A673 (cell line): ENCODE measurements at regions of chr6 and their contacts with region 1.

Region 1: DNA sequence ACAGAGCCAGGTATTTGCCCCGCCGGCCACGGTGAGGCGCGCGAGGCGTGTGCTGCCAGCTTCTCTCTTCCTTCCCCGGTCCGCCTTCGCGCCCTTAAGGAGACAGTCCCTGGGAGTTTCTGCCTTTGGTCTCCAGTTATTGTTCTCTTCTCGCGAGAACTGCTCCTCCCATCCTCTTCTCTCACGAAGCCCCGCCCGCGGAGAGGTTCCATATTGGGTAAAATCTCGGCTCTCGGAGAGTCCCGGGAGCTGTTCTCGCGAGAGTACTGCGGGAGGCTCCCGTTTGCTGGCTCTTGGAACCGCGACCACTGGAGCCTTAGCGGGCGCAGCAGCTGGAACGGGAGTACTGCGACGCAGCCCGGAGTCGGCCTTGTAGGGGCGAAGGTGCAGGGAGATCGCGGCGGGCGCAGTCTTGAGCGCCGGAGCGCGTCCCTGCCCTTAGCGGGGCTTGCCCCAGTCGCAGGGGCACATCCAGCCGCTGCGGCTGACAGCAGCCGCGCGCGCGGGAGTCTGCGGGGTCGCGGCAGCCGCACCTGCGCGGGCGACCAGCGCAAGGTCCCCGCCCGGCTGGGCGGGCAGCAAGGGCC is at the start of gene MAPK14:
- DNase-seq: peak; percentile 100
- H3K4me3 ChIP-seq: peak within 1 kb of the TSS; percentile 97
- H3K27ac ChIP-seq: peak within 1 kb of the TSS; percentile 92
- H3K4me1 ChIP-seq: peaks cover 11% of the 10 kb centered on the region
- H3K27me3 ChIP-seq: no peaks in the 10 kb centered on the region
- CTCF ChIP-seq: peak; percentile 94
- total RNA-seq, gene MAPK14: 50.8 and 53.3 TPM in 2 replicates

Region 2: GRCh38 chr6:34953061-34954025 is 1074.3 kb before region 1 on chr6:
- CTCF ChIA-PET with region 1: no interaction called
- POLR2A ChIA-PET with region 1: no interaction called
- intact Hi-C with region 1: no loop called
- DNase-seq: no peak
- H3K4me3 ChIP-seq: no peak overlapping the region
- H3K27ac ChIP-seq: no peak overlapping the region
- H3K4me1 ChIP-seq: peaks cover 47% of the 10 kb centered on the region
- H3K27me3 ChIP-seq: no peaks in the 10 kb centered on the region
- CTCF ChIP-seq: no peak

Region 3: GRCh38 chr6:36094753-36095496 is 67.3 kb after region 1 on chr6:
- CTCF ChIA-PET with region 1: interaction called, 6 read pairs
- POLR2A ChIA-PET with region 1: no interaction called
- intact Hi-C with region 1: loop called (anchors 1 kb)
- DNase-seq: peak; percentile 87
- H3K4me3 ChIP-seq: no peak overlapping the region
- H3K27ac ChIP-seq: no peak overlapping the region
- H3K4me1 ChIP-seq: peaks cover 10% of the 10 kb centered on the region
- H3K27me3 ChIP-seq: no peaks in the 10 kb centered on the region
- CTCF ChIP-seq: peak; percentile 97

Region 4: DNA sequence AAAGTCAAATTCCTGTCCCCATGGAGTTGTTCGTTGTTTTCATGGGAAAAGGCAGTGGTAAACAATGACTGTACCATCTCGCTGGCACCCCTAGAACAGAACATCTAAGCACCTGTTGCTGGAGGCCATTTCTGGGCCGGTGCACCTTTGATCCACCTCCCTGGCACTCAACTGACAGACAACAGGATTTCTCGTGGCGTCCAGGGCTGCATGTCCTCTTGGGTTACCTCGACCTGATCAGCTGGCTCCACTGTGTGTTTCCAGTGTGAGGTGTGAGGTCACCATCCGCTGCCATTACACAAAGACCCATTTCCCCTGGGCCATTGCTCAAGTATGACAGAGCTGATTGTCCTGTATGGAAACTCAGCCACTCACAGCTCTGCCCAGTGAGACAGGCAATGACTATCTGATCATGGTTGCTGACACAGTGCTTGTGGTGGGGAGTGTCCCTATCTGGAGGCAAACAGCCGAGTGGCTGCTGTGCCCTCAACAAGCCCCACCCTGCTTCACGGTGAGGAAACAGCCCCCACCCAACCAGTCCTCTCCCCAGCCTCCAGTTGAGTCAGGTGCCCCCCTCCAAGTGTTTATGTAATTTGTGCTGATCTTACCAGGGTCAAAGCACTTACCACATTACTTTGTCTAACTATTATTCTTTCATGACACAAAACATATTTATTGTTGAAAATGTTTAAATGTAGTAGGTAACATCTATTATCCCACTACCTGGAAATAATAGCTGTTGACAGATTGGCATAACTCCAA is 90.9 kb after region 1 on chr6:
- CTCF ChIA-PET with region 1: no interaction called
- POLR2A ChIA-PET with region 1: no interaction called
- intact Hi-C with region 1: no loop called
- DNase-seq: no peak
- H3K4me3 ChIP-seq: no peak overlapping the region
- H3K27ac ChIP-seq: no peak overlapping the region
- H3K4me1 ChIP-seq: no peaks in the 10 kb centered on the region
- H3K27me3 ChIP-seq: no peaks in the 10 kb centered on the region
- CTCF ChIP-seq: no peak

Region 5: DNA sequence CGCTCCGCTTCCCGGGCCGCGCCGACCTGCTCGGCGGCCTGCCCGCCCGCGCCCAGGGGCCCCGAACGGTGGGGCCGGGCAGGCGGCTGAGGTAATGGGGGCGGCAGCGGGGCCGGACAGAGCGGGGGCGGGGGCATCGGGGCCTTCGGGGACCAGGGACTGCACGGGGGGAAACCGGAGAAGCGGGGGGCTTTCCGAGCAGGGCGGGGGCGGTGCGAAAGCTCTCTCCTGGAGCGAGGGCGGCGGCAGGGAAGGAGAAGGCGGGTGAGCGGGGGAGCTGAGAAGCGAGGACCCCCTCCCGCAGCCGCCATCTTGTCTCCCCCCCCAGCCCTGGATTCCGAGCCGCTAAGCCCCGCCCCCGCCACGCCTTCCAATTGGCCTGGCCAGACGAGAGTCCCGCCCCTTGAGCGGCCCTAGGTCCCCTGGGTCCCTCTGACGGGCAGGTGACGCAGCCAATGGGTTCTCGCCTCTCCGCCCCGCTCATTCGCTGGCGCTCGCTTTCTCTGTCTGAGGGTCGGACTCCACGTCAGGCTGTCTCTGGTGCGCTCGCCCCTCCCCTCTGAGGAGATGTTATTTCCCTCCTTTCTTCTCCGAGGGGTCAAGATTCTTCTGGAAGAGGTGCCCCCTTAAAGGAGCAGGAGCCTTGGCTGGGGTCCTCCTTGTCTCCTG is 169.4 kb after region 1 on chr6:
- CTCF ChIA-PET with region 1: no interaction called
- POLR2A ChIA-PET with region 1: no interaction called
- intact Hi-C with region 1: loop called (anchors 2 kb)
- DNase-seq: peak; percentile 98
- H3K4me3 ChIP-seq: peak overlapping the region; percentile 70
- H3K27ac ChIP-seq: peak overlapping the region; percentile 96
- H3K4me1 ChIP-seq: peaks cover 8% of the 10 kb centered on the region
- H3K27me3 ChIP-seq: no peaks in the 10 kb centered on the region
- CTCF ChIP-seq: no peak

Region 6: GRCh38 chr6:36563237-36563927 is 535.8 kb after region 1 on chr6:
- CTCF ChIA-PET with region 1: no interaction called
- POLR2A ChIA-PET with region 1: no interaction called
- intact Hi-C with region 1: no loop called
- DNase-seq: peak; percentile 23
- H3K4me3 ChIP-seq: no peak overlapping the region
- H3K27ac ChIP-seq: no peak overlapping the region
- H3K4me1 ChIP-seq: no peaks in the 10 kb centered on the region
- H3K27me3 ChIP-seq: no peaks in the 10 kb centered on the region
- CTCF ChIP-seq: no peak

Region 7: GRCh38 chr6:36827261-36828079 is 799.9 kb after region 1 on chr6:
- CTCF ChIA-PET with region 1: no interaction called
- POLR2A ChIA-PET with region 1: no interaction called
- intact Hi-C with region 1: no loop called
- DNase-seq: no peak
- H3K4me3 ChIP-seq: no peak overlapping the region
- H3K27ac ChIP-seq: no peak overlapping the region
- H3K4me1 ChIP-seq: no peaks in the 10 kb centered on the region
- H3K27me3 ChIP-seq: no peaks in the 10 kb centered on the region
- CTCF ChIP-seq: no peak